ENCODE measurements at regions of chr22 and their contacts with region 1.

Region 1: GRCh38 chr22:46320166-46320710 is 15.3 kb upstream of the TRMU start:
- DNase-seq: no peak
- H3K4me3 ChIP-seq: no peak overlapping the region
- CTCF ChIP-seq: no peak

Region 2: GRCh38 chr22:46290121-46290842 is 30.0 kb before region 1 on chr22:
- CTCF ChIA-PET with region 1: no interaction called
- POLR2A ChIA-PET with region 1: no interaction called
- DNase-seq: no peak
- H3K4me3 ChIP-seq: no peak overlapping the region
- CTCF ChIP-seq: no peak

Region 3: DNA sequence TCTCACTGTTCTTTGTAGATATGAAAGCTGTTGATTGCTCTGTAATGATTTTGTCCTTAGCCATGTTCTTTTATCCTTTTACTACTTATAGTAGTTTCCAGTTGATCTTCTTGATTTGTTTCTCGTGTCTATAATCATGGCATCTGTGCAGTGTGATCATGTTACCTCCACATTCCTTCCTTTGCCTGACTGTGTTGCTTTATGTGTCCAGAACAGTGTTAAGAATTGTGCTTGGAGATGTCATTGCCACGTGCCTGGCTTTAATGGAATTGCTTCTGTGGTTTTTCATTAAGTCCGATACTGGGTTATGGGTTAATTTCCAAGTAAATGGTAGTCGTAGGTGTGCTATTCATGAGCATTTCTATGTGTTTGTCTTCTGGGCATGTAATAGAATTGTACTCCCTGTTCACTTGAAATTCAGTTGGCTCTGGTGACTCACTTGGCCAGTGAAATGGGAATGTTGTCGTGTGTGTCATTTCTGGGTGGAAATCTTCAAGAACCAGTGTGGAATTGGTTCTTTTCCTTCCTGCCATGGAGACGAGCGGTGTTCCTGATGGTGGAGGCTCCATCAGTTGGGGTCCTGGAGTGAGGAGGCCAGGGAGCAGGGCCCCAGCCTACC is 16.8 kb before region 1 on chr22:
- CTCF ChIA-PET with region 1: interaction called, 10 read pairs
- POLR2A ChIA-PET with region 1: no interaction called
- DNase-seq: no peak
- H3K4me3 ChIP-seq: no peak overlapping the region
- CTCF ChIP-seq: no peak

Region 4: DNA sequence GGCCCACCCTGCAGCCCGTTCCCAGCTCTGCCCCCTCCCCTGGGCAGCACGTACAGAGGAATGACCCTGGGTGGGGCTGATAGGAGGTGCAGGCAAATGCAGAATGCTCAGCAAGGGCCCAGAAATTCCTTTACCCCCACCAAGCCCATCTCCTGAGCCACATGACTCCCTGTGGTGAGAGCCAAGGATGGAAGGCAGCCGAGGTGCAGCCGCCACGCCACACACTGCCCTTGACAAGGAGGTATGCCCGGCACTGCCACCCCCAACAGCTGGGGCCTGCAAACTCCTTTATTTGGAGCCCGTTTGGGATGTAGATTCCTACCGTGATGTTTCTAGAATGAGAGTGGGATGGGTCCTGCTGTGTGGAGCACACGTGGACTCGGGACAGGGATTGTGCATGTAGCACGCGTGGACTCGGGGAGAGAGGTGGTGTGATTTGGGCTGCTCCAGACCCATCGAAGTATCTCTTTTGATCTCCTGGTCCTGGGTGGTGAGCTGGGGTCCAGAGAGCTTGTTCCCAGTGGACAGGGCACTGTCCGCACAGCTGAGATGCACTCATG is 10.6 kb before region 1 on chr22:
- CTCF ChIA-PET with region 1: interaction called, 20 read pairs
- POLR2A ChIA-PET with region 1: no interaction called
- DNase-seq: no peak
- H3K4me3 ChIP-seq: no peak overlapping the region
- CTCF ChIP-seq: no peak

Region 5: DNA sequence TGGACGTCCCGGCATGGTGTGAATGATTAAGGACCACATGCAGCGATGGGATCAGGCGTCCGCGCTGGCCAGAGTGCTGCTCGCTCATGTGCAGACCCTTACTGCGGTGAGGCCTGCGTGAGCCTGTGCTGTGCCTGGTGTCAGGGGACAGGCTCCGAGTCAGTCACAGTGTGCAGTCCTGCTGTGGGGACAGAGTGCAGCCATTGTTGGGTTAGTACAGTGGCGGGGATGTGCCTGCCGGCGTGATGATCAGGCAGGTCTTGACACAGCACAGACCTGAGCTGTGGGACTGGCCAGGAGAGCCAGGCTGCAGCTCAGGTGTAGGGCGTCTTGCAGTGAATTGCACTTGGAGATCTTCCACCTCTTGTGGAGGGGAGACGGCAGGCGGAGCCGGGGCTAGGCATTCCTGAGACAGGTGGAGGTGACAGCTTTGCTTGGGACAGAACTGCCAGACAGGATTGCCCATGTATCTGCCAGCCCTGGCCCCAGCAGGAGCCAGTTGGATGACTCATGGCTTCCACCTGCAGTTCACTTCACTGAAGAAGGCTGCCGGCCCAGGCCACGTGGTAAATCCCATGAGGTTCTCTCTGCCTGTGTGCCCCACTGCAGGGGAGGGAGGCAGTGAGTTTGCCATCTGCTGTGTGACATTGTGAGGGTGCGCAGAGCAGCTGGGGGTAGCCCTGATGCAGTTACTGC is 32.6 kb after region 1 on chr22:
- CTCF ChIA-PET with region 1: no interaction called
- POLR2A ChIA-PET with region 1: no interaction called
- DNase-seq: no peak
- H3K4me3 ChIP-seq: no peak overlapping the region
- CTCF ChIP-seq: no peak